Endothelial cell of umbilical vein (primary cell): ENCODE measurements at regions of chr3 and their contacts with region 1.

Region 1: DNA sequence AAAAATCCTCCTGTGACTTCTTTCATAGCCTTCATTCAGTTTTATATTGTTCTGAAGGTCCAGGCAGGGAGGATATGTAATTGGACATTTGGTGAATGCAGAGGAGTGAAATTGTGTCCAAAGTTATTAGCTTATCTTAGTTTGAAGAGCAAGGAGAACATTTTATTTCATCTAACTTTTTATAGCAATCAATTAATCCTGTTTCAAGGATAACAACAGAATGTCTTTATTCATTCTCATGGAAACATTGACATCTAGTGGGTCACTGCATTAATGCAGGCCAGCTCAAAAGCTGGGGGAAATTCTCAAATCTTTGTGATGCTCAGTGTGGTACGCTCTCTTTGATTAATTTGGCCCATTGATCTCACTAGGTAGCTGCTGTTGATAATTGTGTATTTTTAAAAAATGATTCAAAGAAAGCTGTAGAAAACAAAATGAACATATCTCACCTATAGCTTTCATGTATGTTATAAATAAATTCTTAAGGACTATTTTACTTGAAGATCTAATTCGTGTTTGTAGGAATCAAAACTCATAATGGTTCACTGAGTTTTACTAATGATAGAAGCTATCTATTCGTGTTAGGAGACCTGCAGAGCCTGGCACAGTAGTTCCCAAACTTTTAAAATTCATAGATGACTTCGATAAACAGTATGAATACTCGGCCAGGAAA is 150.8 kb upstream of the KCNMB2 start:
- DNase-seq: peak; percentile 71
- H3K4me3 ChIP-seq: no peak overlapping the region
- H3K27ac ChIP-seq: no peak overlapping the region
- H3K4me1 ChIP-seq: peaks cover 35% of the 10 kb centered on the region
- H3K27me3 ChIP-seq: no peaks in the 10 kb centered on the region
- CTCF ChIP-seq: peak; percentile 53 to 77
- POLR2A ChIP-seq: no peak

Region 2: DNA sequence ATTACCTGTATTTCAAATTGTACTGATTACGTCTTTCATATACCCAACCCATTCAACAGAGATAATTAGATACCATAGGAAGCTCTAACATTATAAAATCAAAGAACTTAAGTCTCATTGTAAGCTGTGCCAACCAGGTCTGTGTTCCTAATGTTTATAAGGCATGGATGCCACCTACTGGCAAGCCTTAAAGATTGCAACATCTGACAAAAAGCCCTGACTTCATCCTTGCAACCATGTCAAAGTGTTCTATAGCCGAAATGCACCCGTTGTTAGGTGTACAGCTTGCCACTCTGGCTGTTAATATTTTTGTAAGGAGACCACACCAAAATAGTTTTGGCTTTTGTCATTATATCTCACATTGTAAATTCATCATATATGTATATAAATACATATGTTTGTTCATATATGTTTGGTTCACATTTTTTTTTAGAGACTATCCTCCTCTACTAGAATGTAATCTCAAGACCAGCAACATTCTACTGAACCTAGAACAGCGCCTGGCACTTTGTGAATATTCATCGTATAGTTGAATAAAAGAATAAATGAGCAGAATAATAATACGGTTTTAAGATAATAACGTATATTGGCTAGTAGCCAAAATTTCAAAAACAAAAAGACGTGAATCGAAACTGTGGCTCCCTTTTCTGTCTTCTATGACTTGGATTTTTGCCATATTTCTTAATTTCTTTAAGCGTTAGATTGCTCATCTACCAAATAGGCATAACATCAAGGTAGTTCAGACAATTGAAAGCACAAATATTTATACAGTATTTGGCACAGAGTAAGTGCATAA is 1446.2 kb before region 1 on chr3:
- CTCF ChIA-PET with region 1: interaction called, 5 read pairs
- POLR2A ChIA-PET with region 1: no interaction called
- dilution Hi-C with region 1: no loop called
- intact Hi-C with region 1: loop called (anchors 1 kb)
- DNase-seq: peak; percentile 80
- H3K4me3 ChIP-seq: peak overlapping the region in 1 of 3 experiments; percentile 21
- H3K27ac ChIP-seq: no peak overlapping the region
- H3K4me1 ChIP-seq: no peaks in the 10 kb centered on the region
- H3K27me3 ChIP-seq: no peaks in the 10 kb centered on the region
- CTCF ChIP-seq: peak; percentile 71 to 72
- POLR2A ChIP-seq: no peak

Region 3: GRCh38 chr3:177448987-177449975 is 936.1 kb before region 1 on chr3:
- CTCF ChIA-PET with region 1: no interaction called
- POLR2A ChIA-PET with region 1: no interaction called
- dilution Hi-C with region 1: no loop called
- intact Hi-C with region 1: loop called (anchors 2 kb)
- DNase-seq: no peak
- H3K4me3 ChIP-seq: no peak overlapping the region
- H3K27ac ChIP-seq: no peak overlapping the region
- H3K4me1 ChIP-seq: peaks cover 23% of the 10 kb centered on the region
- H3K27me3 ChIP-seq: no peaks in the 10 kb centered on the region
- CTCF ChIP-seq: no peak
- POLR2A ChIP-seq: no peak

Region 4: DNA sequence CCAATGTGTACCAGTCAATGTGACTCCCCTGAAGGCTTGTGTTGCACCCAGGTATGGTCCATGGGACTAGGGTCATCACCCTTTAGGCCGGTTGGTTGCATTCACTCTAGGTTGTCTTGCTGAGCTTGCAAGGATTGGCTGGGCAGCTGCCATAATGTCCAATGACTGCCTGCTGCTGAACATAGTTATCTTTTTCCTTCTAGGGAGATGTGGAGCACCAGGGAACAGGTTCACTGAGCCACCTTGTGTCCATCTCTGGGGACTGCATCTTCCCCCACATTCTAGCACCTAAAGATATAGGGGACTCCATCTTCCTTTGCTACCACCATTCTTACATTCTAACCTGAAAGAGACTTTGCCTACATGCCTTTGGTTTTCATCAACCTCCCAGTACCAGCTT is 607.7 kb before region 1 on chr3:
- CTCF ChIA-PET with region 1: interaction called, 7 read pairs
- POLR2A ChIA-PET with region 1: no interaction called
- dilution Hi-C with region 1: no loop called
- intact Hi-C with region 1: loop called (anchors 1 kb)
- DNase-seq: peak; percentile 41
- H3K4me3 ChIP-seq: no peak overlapping the region
- H3K27ac ChIP-seq: no peak overlapping the region
- H3K4me1 ChIP-seq: peaks cover 13% of the 10 kb centered on the region
- H3K27me3 ChIP-seq: no peaks in the 10 kb centered on the region
- CTCF ChIP-seq: peak; percentile 52 to 57
- POLR2A ChIP-seq: no peak

Region 5: GRCh38 chr3:178078953-178079352 is 306.5 kb before region 1 on chr3:
- CTCF ChIA-PET with region 1: interaction called, 3 read pairs
- POLR2A ChIA-PET with region 1: no interaction called
- dilution Hi-C with region 1: no loop called
- intact Hi-C with region 1: loop called (anchors 1 kb)
- DNase-seq: peak; percentile 99
- H3K4me3 ChIP-seq: no peak overlapping the region
- H3K27ac ChIP-seq: peak overlapping the region; percentile 81
- H3K4me1 ChIP-seq: peaks cover 26% of the 10 kb centered on the region
- H3K27me3 ChIP-seq: no peaks in the 10 kb centered on the region
- CTCF ChIP-seq: no peak
- POLR2A ChIP-seq: no peak

Region 6: GRCh38 chr3:178195824-178196223 is 189.6 kb before region 1 on chr3:
- CTCF ChIA-PET with region 1: no interaction called
- POLR2A ChIA-PET with region 1: no interaction called
- dilution Hi-C with region 1: no loop called
- intact Hi-C with region 1: no loop called
- DNase-seq: no peak
- H3K4me3 ChIP-seq: no peak overlapping the region
- H3K27ac ChIP-seq: no peak overlapping the region
- H3K4me1 ChIP-seq: peaks cover 5% of the 10 kb centered on the region
- H3K27me3 ChIP-seq: no peaks in the 10 kb centered on the region
- CTCF ChIP-seq: no peak
- POLR2A ChIP-seq: no peak

Region 7: DNA sequence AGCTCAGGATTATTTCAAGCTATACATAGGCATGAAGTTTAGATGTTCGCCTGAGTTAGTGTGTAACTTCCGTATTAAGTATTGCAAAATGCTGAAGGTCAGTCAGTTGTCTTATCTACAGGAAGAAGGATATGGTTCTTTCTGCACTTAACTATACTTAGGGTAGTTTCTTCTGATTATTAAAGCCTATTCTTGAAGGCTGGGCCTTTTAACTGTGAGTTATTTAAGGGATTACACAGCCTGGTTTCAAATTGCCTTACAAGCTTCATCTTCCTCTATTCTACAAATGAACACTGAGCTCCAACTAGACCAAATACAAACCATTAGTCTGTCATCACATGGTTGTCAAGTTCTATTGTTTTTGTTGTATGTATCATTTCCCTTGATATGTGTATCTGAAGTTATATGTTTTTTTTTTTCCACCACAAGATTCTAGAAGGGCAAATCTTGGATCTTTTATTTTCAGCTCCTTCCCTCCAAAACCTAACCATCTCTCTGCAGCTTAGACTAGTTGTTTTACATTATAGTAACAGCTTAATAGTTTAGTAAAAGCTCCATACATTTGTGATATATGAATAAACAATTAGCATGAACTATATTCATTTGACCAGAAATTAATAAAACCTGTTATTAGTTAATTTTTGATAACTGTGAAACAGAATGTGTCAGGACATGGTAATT is 122.0 kb before region 1 on chr3:
- CTCF ChIA-PET with region 1: interaction called, 3 read pairs
- POLR2A ChIA-PET with region 1: no interaction called
- dilution Hi-C with region 1: no loop called
- intact Hi-C with region 1: loop called (anchors 1 kb)
- DNase-seq: peak; percentile 88
- H3K4me3 ChIP-seq: no peak overlapping the region
- H3K27ac ChIP-seq: peak overlapping the region; percentile 55
- H3K4me1 ChIP-seq: peaks cover 17% of the 10 kb centered on the region
- H3K27me3 ChIP-seq: no peaks in the 10 kb centered on the region
- CTCF ChIP-seq: no peak
- POLR2A ChIP-seq: no peak

Region 8: GRCh38 chr3:179158336-179159039 is 773.1 kb after region 1 on chr3:
- CTCF ChIA-PET with region 1: no interaction called
- POLR2A ChIA-PET with region 1: no interaction called
- dilution Hi-C with region 1: no loop called
- intact Hi-C with region 1: no loop called
- DNase-seq: no peak
- H3K4me3 ChIP-seq: no peak overlapping the region
- H3K27ac ChIP-seq: no peak overlapping the region
- H3K4me1 ChIP-seq: no peaks in the 10 kb centered on the region
- H3K27me3 ChIP-seq: no peaks in the 10 kb centered on the region
- CTCF ChIP-seq: no peak
- POLR2A ChIP-seq: no peak